GM10248 (cell line): ENCODE measurements at regions of chr4 and their contacts with region 1.

Region 1: DNA sequence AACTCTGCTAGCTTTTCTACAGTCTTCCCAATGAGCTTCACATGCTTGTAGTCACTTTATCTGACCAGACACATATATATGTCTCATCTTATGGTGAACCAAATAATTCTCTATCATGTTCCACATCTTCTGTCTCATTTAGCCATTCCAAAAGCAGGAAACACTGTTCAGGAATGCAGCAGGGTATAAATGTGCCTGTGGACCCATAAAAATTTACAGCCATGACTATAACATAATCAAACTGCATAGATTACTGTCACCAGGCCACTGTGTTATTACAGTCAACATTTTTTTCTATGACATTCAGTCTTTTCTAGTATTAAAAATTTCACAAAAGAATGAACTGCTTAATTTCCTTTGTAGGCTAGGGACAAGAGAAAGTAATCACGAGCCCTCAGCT is 170.0 kb upstream of the NPY2R start:
- DNase-seq: no peak
- CTCF ChIP-seq: no peak

Region 2: DNA sequence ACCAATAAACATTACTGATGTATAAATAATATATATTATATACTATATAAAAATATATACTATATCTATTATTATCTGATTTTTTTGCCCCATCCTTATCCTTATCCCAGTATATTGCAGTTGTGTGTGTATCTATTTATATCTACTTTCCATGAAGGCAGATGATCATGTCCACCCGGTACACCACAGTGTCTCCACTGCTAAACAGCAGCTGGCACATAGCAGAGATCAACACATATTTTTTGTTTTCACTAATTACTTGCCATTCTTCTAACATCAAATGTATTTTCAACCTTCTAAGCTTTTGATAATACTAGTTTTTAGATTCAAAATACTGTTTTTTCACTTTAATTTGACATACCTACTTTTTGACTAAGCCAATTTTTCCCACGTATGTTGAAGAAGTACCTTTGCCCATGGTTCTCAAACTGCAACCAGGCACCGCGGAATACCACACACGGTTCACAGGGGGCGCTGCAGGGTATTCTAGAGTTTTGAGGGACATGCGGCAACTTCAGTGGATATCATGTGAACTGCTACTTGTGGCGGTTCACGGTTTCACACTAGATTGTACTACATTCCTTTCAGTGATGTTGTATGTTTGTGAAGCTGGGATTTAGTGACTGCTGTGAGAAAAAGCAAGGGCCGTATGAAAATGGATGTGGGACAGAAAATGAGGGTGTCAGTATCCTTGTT is 12.5 kb before region 1 on chr4:
- CTCF ChIA-PET with region 1: interaction called, 20 read pairs
- POLR2A ChIA-PET with region 1: no interaction called
- DNase-seq: no peak
- CTCF ChIP-seq: peak; percentile 33